ENCODE measurements at regions of chr7 and their contacts with region 1.

Region 1: GRCh38 chr7:80060218-80060806 is 74.3 kb upstream of the GNAI1 start:
- DNase-seq: peak; percentile 36
- CTCF ChIP-seq: no peak

Region 2: DNA sequence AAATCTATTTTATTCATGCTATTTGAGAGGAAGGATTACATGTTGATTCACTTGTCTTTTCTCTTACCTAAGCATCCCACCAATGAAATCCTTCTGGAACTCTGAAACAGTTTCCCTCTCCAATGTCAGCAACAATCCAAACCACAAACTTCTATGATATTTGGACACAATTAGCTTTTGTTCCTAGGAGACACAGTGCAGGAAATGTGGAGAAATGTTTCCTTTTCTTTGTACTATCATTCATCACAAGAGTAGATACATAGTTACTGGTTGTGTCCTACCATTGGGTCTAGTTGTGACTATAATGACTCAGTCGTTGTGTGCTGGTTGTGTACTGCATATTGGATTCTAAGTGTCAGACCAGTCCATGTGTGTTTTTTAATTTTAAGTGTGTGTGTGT is 450.0 kb before region 1 on chr7:
- in situ Hi-C with region 1: no loop called
- DNase-seq: no peak
- CTCF ChIP-seq: no peak

Region 3: DNA sequence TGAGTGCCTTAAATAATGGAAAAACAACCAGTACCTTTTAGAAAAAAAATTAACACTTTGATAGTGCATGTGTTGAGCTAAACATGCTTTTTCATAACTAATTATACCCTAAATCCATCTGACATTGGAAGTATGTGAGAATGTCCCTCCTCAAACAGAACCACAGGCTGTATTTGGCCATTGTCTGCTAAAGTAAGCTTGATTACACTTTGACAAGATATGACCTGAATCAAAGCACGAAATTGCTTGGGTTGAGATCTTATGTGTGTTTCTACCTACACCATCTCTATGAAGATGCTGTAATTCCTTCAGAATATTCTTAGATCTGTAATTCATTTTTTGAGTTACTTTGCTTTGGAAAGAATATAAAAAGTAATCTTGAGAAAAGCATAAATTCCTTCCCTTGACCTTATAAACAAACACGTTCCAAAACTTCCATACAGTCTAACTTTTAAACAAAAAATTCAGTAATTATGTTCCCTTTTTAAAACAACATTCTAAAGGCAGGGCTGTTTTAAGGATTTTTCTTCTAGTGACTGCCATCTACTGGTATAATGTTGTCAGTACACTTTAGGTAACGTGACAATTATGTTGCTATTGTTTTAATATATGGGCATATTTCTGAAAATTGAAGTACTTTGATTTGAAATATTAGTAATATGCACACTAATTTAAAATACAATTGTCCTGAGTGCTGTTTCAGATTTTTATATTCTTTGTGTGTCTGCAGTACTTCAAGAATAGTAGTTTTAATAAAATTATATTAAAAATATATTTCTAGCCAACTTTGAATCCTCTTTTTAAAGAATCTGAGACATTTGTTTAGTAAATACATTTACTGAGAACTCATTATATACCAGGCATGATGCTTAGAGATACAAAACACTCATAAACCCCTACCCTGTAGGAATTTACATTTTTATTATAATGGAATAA is 599.1 kb after region 1 on chr7:
- in situ Hi-C with region 1: loop called (anchors 25 kb)
- DNase-seq: peak; percentile 27
- CTCF ChIP-seq: peak; percentile 13